Tibial artery (tissue), 4 donors: ENCODE measurements at regions of chr6 and their contacts with region 1.

Region 1: GRCh38 chr6:167669870-167670802 is 156.6 kb upstream of the AFDN start:
- DNase-seq: no peak
- H3K4me3 ChIP-seq: no peak overlapping the region
- H3K27ac ChIP-seq: no peak overlapping the region
- H3K4me1 ChIP-seq: no peaks in the 10 kb centered on the region
- H3K27me3 ChIP-seq: no peaks in the 10 kb centered on the region
- CTCF ChIP-seq: no peak

Region 2: GRCh38 chr6:167479901-167480648 is 190.1 kb before region 1 on chr6:
- intact Hi-C with region 1: loop called (anchors 5 kb)
- DNase-seq: no peak
- H3K4me3 ChIP-seq: no peak overlapping the region
- H3K27ac ChIP-seq: no peak overlapping the region
- H3K4me1 ChIP-seq: no peaks in the 10 kb centered on the region
- H3K27me3 ChIP-seq: peaks cover 0 to 5% of the 10 kb centered on the region in 2 donors
- CTCF ChIP-seq: no peak

Region 3: DNA sequence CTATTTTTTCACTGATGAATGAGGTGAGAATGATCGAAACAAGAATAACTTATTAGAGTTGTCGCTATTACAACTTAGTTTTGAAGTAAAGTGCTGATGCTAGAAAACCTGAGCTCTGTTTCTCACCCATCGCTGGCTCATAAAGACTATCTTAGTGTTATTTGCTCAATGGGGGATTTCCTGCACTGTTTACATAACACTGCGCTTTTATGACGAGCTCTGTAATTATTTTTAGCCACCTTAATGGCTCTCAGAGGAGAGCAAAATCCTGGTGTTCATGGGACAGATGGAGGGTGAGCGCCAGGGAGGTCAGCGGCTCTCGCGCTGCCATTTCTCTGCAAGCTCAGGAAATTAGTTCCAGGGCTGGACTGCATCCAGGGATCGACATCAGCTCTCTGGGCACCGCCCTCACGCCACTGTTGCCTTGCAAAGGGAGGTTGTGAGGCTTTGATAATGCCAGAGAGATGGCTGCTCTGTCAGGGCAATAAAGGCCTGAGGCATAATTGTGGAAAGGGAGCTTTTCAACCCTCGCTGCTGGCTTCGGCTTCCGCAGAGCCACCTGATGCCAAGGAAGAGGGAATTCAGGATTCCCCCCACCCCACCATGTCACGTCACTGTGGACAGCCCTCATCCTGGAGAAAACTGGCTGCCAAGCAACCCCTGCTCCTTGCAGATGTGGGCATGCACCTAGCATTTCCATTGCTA is 577.5 kb after region 1 on chr6:
- intact Hi-C with region 1: no loop called
- DNase-seq: no peak
- H3K4me3 ChIP-seq: no peak overlapping the region
- H3K27ac ChIP-seq: no peak overlapping the region
- H3K4me1 ChIP-seq: peaks cover 0 to 9% (median 3%) of the 10 kb centered on the region in 4 donors
- H3K27me3 ChIP-seq: no peaks in the 10 kb centered on the region
- CTCF ChIP-seq: no peak